Lower lobe of right lung (tissue), 2 donors: ENCODE measurements at regions of chr9 and their contacts with region 1.

Region 1: DNA sequence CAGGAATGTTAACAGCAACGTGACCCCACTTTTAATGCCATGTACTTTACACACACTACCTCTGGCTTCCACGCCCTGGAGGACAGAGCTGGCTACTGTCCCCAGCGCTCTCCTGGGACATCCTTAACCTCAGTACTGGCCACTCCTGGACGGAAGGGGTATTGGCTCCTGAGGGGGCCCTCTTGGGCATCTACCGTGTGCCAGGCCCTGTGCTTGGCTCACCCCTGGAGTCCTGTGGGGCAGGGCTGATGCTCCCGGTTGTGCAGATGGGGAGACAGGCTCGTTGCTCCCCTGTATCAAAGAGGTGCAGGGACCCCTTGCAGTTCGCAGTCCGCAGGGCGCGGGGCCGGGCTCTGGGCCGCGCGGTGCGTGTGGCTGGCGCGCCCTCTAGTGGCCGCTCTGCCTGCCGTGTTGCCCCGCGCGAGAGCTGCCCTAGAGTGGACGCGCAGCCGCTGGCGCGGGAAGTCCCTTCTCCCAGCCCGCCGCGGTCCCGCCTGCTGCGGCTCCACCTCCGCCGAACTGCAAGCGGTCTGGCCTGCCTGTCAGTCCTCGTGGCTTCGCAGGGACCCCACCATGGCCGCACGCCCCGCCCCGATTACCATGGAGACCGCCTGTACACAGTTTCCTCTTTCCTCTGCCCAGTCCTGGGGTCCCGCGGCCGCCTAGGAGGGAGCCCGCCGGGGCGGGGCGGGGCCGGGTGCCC is at the start of gene WDR38:
- DNase-seq: peak; percentile 85
- ATAC-seq: peak; percentile 93 to 95
- H3K4me3 ChIP-seq: peak within 1 kb of the TSS; percentile 56
- H3K27ac ChIP-seq: peak within 1 kb of the TSS; percentile 34
- H3K4me1 ChIP-seq: peaks cover 14% of the 10 kb centered on the region
- H3K27me3 ChIP-seq: no peaks in the 10 kb centered on the region
- CTCF ChIP-seq: peak; percentile 98
- total RNA-seq, gene WDR38: 6.6 TPM

Region 2: GRCh38 chr9:124771021-124771866 is 81.7 kb before region 1 on chr9 and contains the start of gene NR6A1:
- intact Hi-C with region 1: loop called (anchors 5 kb)
- DNase-seq: peak; percentile 98
- ATAC-seq: peak; percentile 96
- H3K4me3 ChIP-seq: peak within 1 kb of the TSS; percentile 89
- H3K27ac ChIP-seq: peak within 1 kb of the TSS; percentile 76
- H3K4me1 ChIP-seq: peaks cover 19% of the 10 kb centered on the region
- H3K27me3 ChIP-seq: peaks cover 48% of the 10 kb centered on the region
- CTCF ChIP-seq: peak; percentile 21
- total RNA-seq, gene NR6A1: 4.5 TPM